Activated CD4-positive, alpha-beta T cell treated with anti-CD3 and anti-CD28 coated beads for 36 hours (primary cell): ENCODE measurements at regions of chr5 and their contacts with region 1.

Region 1: DNA sequence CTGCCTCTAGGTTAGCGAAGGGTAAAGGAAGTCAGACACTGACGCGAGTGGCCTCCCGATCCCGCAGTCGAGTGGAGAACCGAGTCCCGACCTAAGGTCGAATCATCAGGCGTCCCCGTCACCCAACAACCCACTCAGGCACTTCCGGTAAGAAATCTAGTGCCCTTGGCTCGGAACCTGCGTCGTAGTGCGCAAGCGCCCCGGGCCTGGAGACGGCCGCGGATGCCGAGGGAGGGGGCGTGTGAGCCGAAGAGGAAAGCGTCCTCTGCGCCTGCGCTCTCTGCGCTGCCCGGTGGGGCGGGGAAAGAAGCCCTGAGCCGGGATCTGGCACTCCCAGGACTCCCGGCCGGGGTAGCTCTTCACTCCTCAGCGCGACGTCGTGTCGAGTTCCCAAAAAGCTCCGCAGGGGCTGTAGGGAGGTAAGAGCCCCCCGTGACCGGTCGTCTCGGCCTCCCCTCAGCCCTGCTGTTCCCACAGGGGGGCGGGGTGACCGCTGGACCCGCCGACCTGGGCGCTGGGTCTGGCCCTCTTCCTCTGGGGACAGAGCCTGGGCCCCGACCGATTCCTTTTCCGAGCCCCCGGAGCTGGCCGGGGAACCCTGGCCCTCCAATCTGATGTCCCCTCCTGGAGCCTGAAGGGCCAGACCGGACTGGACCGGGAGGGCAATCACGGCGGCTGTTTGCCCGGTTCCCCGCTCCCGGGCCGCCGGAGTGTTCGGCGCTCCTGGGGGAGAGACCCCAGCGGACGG is at the start of gene ZFYVE16:
- DNase-seq: peak; percentile 98
- ATAC-seq: peak; percentile 94
- H3K4me3 Mint-ChIP-seq: peak within 1 kb of the TSS; percentile 82
- H3K27ac Mint-ChIP-seq: peak within 1 kb of the TSS; percentile 94
- H3K4me1 Mint-ChIP-seq: peaks cover 17% of the 10 kb centered on the region
- H3K27me3 Mint-ChIP-seq: no peaks in the 10 kb centered on the region
- total RNA-seq, gene ZFYVE16: 11.2 to 11.8 TPM

Region 2: DNA sequence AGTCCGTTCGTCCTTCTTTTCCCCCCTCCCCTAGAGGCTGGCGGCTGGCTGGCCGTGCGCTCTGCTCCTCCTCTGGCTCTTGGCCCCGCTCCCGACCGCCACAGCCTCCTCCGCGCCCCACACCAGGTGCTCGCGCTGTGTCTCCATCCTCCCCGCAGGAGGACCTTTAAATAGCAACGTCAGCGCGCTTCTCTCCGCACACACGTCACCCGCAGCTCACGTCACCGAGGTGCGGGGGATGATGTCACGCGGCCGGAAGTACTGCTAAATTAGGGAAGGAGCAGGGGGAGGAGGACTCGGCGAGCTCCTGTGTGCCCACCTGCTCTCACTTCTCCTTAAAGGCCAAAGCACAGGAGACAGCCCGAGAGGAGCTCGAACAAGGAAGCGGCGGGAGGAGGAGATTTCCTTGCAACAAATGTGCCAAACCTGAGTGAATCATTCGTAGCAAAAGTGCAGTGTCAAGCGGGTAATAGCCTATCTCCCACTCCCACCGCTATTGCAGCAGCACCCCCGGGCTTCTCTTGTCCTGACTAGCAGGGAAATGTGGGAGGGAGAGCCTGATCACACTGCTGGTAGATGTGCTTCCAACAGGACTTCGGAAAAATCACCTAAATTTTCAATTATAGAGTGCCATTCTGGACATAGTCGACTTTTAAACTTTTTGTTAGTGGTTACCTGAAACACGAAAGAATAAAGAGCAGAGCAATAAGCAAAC is 893.4 kb before region 1 on chr5:
- CTCF ChIA-PET with region 1: no interaction called
- POLR2A ChIA-PET with region 1: no interaction called
- intact Hi-C with region 1: loop called (anchors 5 kb)
- DNase-seq: peak; percentile 94
- ATAC-seq: peak; percentile 82
- H3K4me3 Mint-ChIP-seq: peak overlapping the region; percentile 93
- H3K27ac Mint-ChIP-seq: peak overlapping the region; percentile 97
- H3K4me1 Mint-ChIP-seq: peaks cover 35% of the 10 kb centered on the region
- H3K27me3 Mint-ChIP-seq: peaks cover 15% of the 10 kb centered on the region

Region 3: GRCh38 chr5:80093796-80094195 is 314.1 kb before region 1 on chr5:
- CTCF ChIA-PET with region 1: interaction called, 3 read pairs
- POLR2A ChIA-PET with region 1: no interaction called
- intact Hi-C with region 1: loop called in 1 of 2 experiments (anchors 5 kb)
- DNase-seq: no peak
- ATAC-seq: no peak
- H3K4me3 Mint-ChIP-seq: no peak overlapping the region
- H3K27ac Mint-ChIP-seq: peak overlapping the region; percentile 39
- H3K4me1 Mint-ChIP-seq: peaks cover 23% of the 10 kb centered on the region
- H3K27me3 Mint-ChIP-seq: no peaks in the 10 kb centered on the region

Region 4: GRCh38 chr5:80346055-80346454 is 61.9 kb before region 1 on chr5:
- CTCF ChIA-PET with region 1: no interaction called
- POLR2A ChIA-PET with region 1: no interaction called
- intact Hi-C with region 1: no loop called
- DNase-seq: peak; percentile 60
- ATAC-seq: peak; percentile 79
- H3K4me3 Mint-ChIP-seq: no peak overlapping the region
- H3K27ac Mint-ChIP-seq: no peak overlapping the region
- H3K4me1 Mint-ChIP-seq: no peaks in the 10 kb centered on the region
- H3K27me3 Mint-ChIP-seq: peaks cover 6% of the 10 kb centered on the region

Region 5: GRCh38 chr5:80654391-80655230 is 246.7 kb after region 1 on chr5 and contains the starts of genes DHFR and MSH3:
- CTCF ChIA-PET with region 1: no interaction called
- POLR2A ChIA-PET with region 1: no interaction called
- intact Hi-C with region 1: loop called (anchors 1 to 5 kb)
- DNase-seq: peak; percentile 95
- ATAC-seq: peak; percentile 69
- H3K4me3 Mint-ChIP-seq: peak within 1 kb of the TSS; percentile 94
- H3K27ac Mint-ChIP-seq: peak within 1 kb of the TSS; percentile 99
- H3K4me1 Mint-ChIP-seq: peaks cover 21% of the 10 kb centered on the region
- H3K27me3 Mint-ChIP-seq: no peaks in the 10 kb centered on the region
- total RNA-seq, gene DHFR: 105 to 107 TPM
- total RNA-seq, gene MSH3: 25.6 to 27.1 TPM

Region 6: GRCh38 chr5:80871541-80871961 is 463.6 kb after region 1 on chr5:
- CTCF ChIA-PET with region 1: no interaction called
- POLR2A ChIA-PET with region 1: no interaction called
- intact Hi-C with region 1: loop called in 1 of 2 experiments (anchors 5 kb)
- DNase-seq: peak; percentile 76
- ATAC-seq: peak; percentile 97
- H3K4me3 Mint-ChIP-seq: no peak overlapping the region
- H3K27ac Mint-ChIP-seq: peak overlapping the region; percentile 61
- H3K4me1 Mint-ChIP-seq: peaks cover 27% of the 10 kb centered on the region
- H3K27me3 Mint-ChIP-seq: no peaks in the 10 kb centered on the region

Region 7: GRCh38 chr5:82278095-82278918 is 1870.4 kb after region 1 on chr5 and contains the start of gene RPS23:
- CTCF ChIA-PET with region 1: no interaction called
- POLR2A ChIA-PET with region 1: no interaction called
- intact Hi-C with region 1: loop called in 1 of 2 experiments (anchors 5 kb)
- DNase-seq: peak; percentile 93
- ATAC-seq: peak; percentile 95
- H3K4me3 Mint-ChIP-seq: peak within 1 kb of the TSS; percentile 86
- H3K27ac Mint-ChIP-seq: peak within 1 kb of the TSS; percentile 99
- H3K4me1 Mint-ChIP-seq: peaks cover 46% of the 10 kb centered on the region
- H3K27me3 Mint-ChIP-seq: no peaks in the 10 kb centered on the region
- total RNA-seq, gene RPS23: 2,831 to 3,226 TPM